Heart left ventricle (tissue), 16 donors: ENCODE measurements at regions of chrX and their contacts with region 1.

Region 1: DNA sequence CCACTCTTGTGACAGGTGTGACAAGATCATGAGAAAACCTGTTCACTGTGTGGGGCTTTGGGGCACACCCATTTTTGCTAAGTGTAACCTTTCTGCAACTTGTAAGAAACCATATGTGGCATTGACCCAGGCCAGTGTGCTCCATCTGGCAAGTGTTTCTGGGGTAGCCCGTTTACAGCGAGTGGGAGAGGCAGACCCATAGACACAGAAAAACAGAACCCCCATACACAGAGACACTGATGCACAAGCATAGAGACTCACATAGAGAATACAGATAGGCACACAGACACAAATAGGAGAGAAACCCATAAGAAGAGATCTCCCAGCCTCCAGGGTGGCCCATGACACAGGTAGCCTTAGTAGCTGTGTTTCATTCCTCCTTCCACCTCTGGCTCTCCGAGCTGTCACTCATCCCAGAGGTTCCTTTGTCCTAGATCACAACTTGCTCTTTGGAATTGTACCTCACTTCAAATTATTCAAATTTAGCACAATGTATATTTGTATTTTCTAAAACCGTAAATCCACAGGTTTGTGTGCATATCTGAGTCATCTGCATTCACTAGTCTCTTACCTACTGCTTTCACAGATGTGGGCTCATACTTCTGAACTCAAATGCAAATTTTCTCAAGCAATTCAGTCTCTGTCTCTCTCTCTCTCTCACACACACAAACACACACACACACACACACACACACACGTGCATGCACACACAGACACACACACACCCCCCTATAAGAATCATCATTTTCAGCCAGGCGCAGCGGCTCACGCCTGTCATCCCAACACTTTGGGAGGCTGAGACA is 114.4 kb downstream of the SH3KBP1 start:
- DNase-seq: no peak
- ATAC-seq: peak in 1 of 4 donors; percentile 11
- H3K4me3 ChIP-seq: no peak overlapping the region
- H3K27ac ChIP-seq: peak overlapping the region; percentile 2 to 80 (median 66)
- H3K4me1 ChIP-seq: peaks cover 0 to 47% (median 11%) of the 10 kb centered on the region in 12 donors
- H3K27me3 ChIP-seq: no peaks in the 10 kb centered on the region
- CTCF ChIP-seq: no peak
- POLR2A ChIP-seq: no peak

Region 2: GRCh38 chrX:19863212-19863856 is 90.3 kb after region 1 on chrX:
- intact Hi-C with region 1: loop called in 1 of 10 experiments (anchors 10 kb)
- DNase-seq: peak in 2 of 5 donors; percentile 21 to 46
- ATAC-seq: peak in 1 of 4 donors; percentile 28
- H3K4me3 ChIP-seq: no peak overlapping the region
- H3K27ac ChIP-seq: peak overlapping the region in 5 of 12 donors; percentile 10 to 48 (median 34)
- H3K4me1 ChIP-seq: peaks cover 0 to 65% (median 3%) of the 10 kb centered on the region in 12 donors
- H3K27me3 ChIP-seq: no peaks in the 10 kb centered on the region
- CTCF ChIP-seq: no peak
- POLR2A ChIP-seq: no peak